ENCODE measurements at regions of chr12 and their contacts with region 1.

Region 1: DNA sequence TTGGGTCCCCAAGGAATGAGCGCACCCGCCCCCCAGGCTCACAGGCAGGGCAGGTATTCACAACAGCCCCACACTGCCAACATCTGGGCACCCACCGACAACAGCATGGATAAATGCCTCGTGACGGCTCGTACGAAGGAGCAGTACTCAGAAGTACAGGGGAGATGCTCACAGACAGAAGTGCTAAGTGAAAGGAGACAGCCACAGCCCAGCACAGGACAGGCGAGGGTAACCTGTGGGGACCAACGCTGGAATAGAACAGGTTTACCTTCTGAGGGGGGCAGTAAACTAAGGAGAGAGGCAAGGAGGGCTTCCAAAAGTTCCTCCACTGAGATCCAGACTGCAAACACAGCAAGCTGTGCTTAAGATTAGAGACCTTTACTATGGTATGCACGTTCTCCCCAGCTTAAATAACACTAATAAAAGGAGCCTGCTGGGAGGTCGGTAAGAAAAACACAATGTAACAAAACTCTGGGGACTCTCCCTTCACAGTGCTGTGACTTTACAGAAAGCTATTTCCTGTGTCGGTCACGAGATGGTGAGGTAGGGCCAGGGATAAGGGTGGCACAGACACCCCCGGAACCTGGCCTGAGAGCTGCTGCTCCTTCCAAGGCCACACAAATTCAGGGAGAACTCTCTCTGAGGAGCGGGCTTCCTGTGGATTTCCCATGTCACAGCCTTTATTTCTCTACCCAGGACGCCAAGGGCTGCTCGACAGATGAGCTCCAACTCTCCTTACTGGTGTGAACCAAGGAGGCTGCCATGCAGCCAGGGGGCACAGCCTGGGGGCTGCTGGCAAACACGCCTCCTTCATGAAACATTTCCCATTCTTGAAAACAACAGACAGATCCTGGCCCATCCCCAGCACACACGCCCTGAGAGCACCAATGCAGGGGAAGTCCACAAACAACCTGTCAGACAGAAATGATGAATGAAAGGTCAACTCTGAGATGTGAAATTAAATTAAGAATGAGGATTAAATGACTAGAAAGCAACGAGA is 26.3 kb downstream of the SLC15A4 start:
- DNase-seq: no peak
- ATAC-seq: peak; percentile 67
- H3K4me3 Mint-ChIP-seq: peak overlapping the region; percentile 77
- H3K27ac Mint-ChIP-seq: peak overlapping the region; percentile 94
- H3K4me1 Mint-ChIP-seq: peaks cover 93% of the 10 kb centered on the region
- H3K27me3 Mint-ChIP-seq: no peaks in the 10 kb centered on the region
- CTCF ChIP-seq: no peak

Region 2: DNA sequence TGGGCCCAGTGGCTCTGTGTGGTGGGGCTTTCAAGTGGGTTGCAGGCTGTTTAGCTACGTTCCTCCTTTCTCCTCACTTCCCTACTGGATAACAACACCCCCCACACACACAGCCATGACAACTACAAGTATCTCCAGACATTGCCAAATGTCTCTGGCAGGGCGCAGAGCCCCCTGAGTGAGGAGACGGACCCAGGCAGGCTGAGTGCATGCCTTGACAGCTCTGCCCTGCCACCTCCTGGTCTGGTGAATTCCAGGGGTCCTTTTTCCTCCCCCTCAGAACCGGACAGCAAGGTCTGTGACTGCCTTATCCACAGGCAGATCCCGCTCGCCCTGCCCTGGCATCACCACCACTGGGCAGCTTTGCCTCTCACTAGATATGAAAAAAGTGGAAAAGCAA is 254.0 kb before region 1 on chr12:
- CTCF ChIA-PET with region 1: no interaction called
- POLR2A ChIA-PET with region 1: no interaction called
- intact Hi-C with region 1: no loop called
- DNase-seq: no peak
- ATAC-seq: no peak
- H3K4me3 Mint-ChIP-seq: no peak overlapping the region
- H3K27ac Mint-ChIP-seq: no peak overlapping the region
- H3K4me1 Mint-ChIP-seq: no peaks in the 10 kb centered on the region
- H3K27me3 Mint-ChIP-seq: no peaks in the 10 kb centered on the region
- CTCF ChIP-seq: no peak

Region 3: GRCh38 chr12:128783129-128783574 is 14.3 kb before region 1 on chr12:
- CTCF ChIA-PET with region 1: interaction called, 32 read pairs
- POLR2A ChIA-PET with region 1: interaction called, 7 read pairs
- intact Hi-C with region 1: loop called (anchors 1 kb)
- DNase-seq: no peak
- ATAC-seq: peak; percentile 52
- H3K4me3 Mint-ChIP-seq: peak overlapping the region; percentile 56
- H3K27ac Mint-ChIP-seq: peak overlapping the region; percentile 64
- H3K4me1 Mint-ChIP-seq: peaks cover 30% of the 10 kb centered on the region
- H3K27me3 Mint-ChIP-seq: no peaks in the 10 kb centered on the region
- CTCF ChIP-seq: no peak

Region 4: GRCh38 chr12:128817111-128818015 is 19.9 kb after region 1 on chr12:
- CTCF ChIA-PET with region 1: interaction called, 18 read pairs
- POLR2A ChIA-PET with region 1: interaction called, 86 read pairs
- intact Hi-C with region 1: loop called (anchors 1 kb)
- DNase-seq: no peak
- ATAC-seq: no peak
- H3K4me3 Mint-ChIP-seq: peak overlapping the region; percentile 57
- H3K27ac Mint-ChIP-seq: peak overlapping the region; percentile 80
- H3K4me1 Mint-ChIP-seq: peaks cover 93% of the 10 kb centered on the region
- H3K27me3 Mint-ChIP-seq: no peaks in the 10 kb centered on the region
- CTCF ChIP-seq: no peak

Region 5: GRCh38 chr12:128829861-128830504 is 32.6 kb after region 1 on chr12:
- CTCF ChIA-PET with region 1: interaction called, 15 read pairs
- POLR2A ChIA-PET with region 1: interaction called, 65 read pairs
- intact Hi-C with region 1: loop called (anchors 1 kb)
- DNase-seq: peak; percentile 51
- ATAC-seq: peak; percentile 87
- H3K4me3 Mint-ChIP-seq: peak overlapping the region; percentile 73
- H3K27ac Mint-ChIP-seq: peak overlapping the region; percentile 94
- H3K4me1 Mint-ChIP-seq: peaks cover 36% of the 10 kb centered on the region
- H3K27me3 Mint-ChIP-seq: no peaks in the 10 kb centered on the region
- CTCF ChIP-seq: no peak

Measured in activated B cell treated with CpG ODN at 0.5 μM for 24 hours (primary cell).